Common myeloid progenitor, CD34-positive (primary cell): ENCODE measurements at regions of chrX and their contacts with region 1.

Region 1: DNA sequence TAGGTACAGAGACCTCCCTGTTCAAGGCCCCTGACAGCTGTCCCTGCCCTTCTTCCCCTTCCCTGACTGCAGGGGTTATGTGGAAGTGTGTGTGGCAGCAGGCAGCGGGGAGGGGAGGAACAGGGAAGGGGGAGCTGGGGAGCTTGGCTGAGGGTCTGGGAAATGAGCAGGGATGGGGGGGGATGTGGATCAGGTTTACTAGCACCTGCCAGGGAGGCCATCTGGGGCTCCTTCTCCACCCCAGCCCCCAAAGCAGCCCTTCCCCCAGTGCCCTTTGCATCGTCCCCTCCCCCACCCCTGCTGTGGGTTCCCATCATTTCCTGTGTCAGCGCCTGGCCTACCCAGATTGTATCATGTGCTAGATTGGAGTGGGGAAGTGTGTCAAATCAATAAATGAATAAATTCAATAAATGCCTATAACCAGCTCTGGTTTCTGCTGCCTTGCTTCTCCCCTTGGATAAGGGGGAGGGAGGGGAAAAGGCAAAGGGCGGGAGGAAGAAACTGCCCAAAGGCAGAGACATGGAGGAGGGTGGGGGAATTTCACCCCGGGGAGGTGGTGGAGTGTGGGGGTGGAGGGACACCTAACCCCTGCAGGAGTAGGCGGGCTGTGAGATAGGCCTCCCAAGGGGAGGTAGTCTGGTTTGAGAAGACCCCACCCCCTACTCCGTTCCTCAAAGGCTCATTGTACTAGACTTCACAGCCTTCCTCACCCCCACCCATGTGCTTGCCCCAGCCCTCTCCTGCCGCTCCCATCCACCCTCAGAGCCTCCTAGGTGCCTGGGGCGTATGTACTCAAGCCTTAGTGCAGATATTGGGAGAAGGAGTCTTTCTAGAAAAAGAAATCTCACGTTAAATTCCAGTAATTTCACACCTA is 3.2 kb downstream of the CXorf65 start:
- DNase-seq: peak; percentile 60 to 86 (median 84)
- H3K4me3 ChIP-seq: peak overlapping the region in 5 of 7 experiments; percentile 9 to 64 (median 40)
- H3K27ac ChIP-seq: peak overlapping the region; percentile 67 to 82
- H3K4me1 ChIP-seq: peaks cover 16 to 71% (median 61%) of the 10 kb centered on the region in 4 experiments
- H3K27me3 ChIP-seq: peaks cover 0 to 11% (median 0%) of the 10 kb centered on the region in 5 experiments

Region 2: GRCh38 chrX:71118032-71118984 is 15.0 kb after region 1 on chrX and contains the start of gene MED12:
- CTCF ChIA-PET with region 1: interaction called, 72 read pairs
- POLR2A ChIA-PET with region 1: interaction called, 14 read pairs
- DNase-seq: peak; percentile 85 to 93 (median 93)
- H3K4me3 ChIP-seq: peak within 1 kb of the TSS; percentile 49 to 85 (median 66)
- H3K27ac ChIP-seq: peak within 1 kb of the TSS; percentile 68 to 88
- H3K4me1 ChIP-seq: peaks cover 7 to 18% (median 12%) of the 10 kb centered on the region in 4 experiments
- H3K27me3 ChIP-seq: no peaks in the 10 kb centered on the region